Activated CD4-positive, alpha-beta memory T cell treated with anti-CD3 and anti-CD28 coated beads for 36 hours (primary cell): ENCODE measurements at regions of chr7 and their contacts with region 1.

Region 1: DNA sequence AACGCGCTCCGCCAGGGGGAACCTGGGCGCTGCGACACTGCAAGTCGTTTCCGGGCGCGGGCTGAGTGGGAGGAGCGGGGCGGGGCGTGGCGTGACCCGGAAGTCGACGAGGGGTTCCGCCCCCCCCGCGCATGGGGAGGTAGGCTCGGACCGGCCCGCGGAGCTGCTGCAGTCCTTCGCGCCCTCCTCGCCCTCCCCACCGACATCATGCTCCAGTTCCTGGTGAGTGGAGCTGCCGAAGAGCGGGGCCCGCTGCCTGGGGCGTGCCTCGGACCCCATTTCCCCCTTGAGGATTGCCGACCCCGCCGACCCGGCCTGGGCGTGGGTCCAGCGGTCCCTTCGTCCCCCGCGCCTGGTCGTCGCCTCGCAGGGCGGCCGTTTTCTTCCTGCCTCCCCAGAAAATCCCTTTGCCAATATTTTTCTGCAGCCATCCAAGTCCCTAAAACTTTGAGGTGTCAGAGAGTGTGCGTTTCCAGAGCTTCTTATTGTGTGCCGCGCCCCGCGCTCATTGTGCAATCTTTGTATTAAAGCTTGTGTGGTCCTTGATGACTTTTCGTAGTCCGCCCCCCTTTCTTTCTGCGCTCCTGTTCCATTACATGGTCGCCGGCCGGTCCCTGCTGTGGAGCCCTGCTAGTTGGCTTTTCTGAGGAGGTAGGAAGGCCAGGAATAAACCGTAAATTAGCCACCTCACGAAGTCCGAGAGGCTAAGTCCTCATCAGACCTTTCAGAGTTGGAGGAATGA is at the start of gene STMP1:
- DNase-seq: peak; percentile 97
- H3K4me3 Mint-ChIP-seq: peak within 1 kb of the TSS; percentile 95
- H3K27ac Mint-ChIP-seq: peak within 1 kb of the TSS; percentile 96
- H3K4me1 Mint-ChIP-seq: peaks cover 41% of the 10 kb centered on the region
- H3K27me3 Mint-ChIP-seq: no peaks in the 10 kb centered on the region
- total RNA-seq, gene STMP1: 17.3 to 17.8 TPM

Region 2: DNA sequence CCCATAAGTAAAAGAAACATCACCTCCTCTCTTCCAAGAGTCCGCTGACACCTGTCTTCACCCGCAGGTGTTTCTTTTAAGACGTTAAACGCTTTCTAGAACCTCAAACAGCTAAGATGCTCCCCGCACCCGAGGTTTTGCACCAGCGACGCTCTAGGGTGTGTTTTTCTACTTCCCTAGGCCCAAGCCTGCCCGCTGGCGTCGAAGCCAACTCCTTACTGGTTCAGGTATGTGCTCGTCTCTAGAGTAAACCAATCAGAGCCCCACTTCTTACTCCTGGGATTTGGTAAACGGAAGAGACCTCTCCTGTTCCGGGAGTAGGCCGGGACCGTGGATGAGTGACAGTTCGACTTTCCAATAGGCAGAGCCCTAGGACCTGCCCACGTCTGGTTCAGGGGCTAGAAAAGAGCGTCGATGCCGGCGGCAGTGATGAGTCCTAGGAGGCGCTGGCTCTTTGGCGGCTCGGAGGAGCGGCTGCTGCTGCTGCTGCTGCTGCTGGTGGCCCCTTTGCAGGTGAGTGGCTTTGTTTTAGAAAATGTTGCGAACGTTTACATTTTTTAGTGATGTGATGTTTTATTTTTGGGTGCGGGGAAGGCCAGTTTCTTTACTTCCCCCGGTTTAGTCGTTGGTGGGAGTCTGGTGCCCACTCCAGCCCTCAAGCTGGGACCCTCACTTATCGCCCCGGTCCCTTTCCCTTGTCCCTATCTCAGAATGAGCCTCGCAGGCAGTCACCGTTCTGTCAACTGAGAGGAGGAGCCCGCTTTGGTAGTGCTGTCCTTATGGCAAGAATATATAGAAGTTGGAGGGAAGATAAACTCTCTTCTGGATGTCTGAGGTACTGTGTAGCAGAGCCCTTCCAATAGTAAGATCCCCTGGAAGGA is 1015.9 kb before region 1 on chr7 and contains the start of gene BPGM:
- CTCF ChIA-PET with region 1: no interaction called
- POLR2A ChIA-PET with region 1: no interaction called
- intact Hi-C with region 1: loop called (anchors 5 kb)
- DNase-seq: peak; percentile 98
- H3K4me3 Mint-ChIP-seq: no peak within 1 kb of the TSS
- H3K27ac Mint-ChIP-seq: no peak within 1 kb of the TSS
- H3K4me1 Mint-ChIP-seq: peaks cover 32% of the 10 kb centered on the region
- H3K27me3 Mint-ChIP-seq: no peaks in the 10 kb centered on the region
- total RNA-seq, gene BPGM: 23.7 to 24.9 TPM

Region 3: GRCh38 chr7:135211179-135211945 is 451.2 kb before region 1 on chr7 and contains the start of gene WDR91:
- CTCF ChIA-PET with region 1: no interaction called
- POLR2A ChIA-PET with region 1: interaction called, 3 read pairs
- intact Hi-C with region 1: loop called (anchors 5 kb)
- DNase-seq: peak; percentile 98
- H3K4me3 Mint-ChIP-seq: peak within 1 kb of the TSS; percentile 93
- H3K27ac Mint-ChIP-seq: peak within 1 kb of the TSS; percentile 83
- H3K4me1 Mint-ChIP-seq: peaks cover 23% of the 10 kb centered on the region
- H3K27me3 Mint-ChIP-seq: no peaks in the 10 kb centered on the region
- total RNA-seq, gene WDR91: 10.3 to 11.0 TPM

Region 4: DNA sequence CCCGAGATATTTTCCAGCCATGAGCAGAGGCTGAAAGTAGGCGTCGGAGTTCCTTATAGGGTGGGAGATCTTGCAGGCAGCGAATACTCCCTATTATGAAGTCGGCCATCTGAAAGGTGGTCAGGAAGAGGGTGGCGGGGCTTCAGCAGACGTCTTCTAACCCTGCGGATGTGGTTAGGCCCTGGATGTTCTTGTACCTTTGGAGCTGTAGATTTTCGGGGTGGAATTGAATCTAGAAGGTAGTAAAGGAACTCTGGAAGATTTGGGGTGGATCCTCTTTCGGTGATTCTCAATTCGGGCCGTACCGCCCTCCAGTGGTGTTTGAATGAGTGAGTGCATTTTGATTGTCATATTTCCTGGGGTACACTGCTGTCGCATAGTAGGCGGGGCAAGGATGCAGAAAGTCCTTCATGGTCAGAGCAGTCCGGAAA is 104.2 kb before region 1 on chr7:
- CTCF ChIA-PET with region 1: no interaction called
- POLR2A ChIA-PET with region 1: no interaction called
- intact Hi-C with region 1: loop called (anchors 1 kb)
- DNase-seq: peak; percentile 79
- H3K4me3 Mint-ChIP-seq: no peak overlapping the region
- H3K27ac Mint-ChIP-seq: no peak overlapping the region
- H3K4me1 Mint-ChIP-seq: peaks cover 16% of the 10 kb centered on the region
- H3K27me3 Mint-ChIP-seq: no peaks in the 10 kb centered on the region

Region 5: GRCh38 chr7:135682191-135682590 is 19.6 kb after region 1 on chr7:
- CTCF ChIA-PET with region 1: interaction called, 7 read pairs
- POLR2A ChIA-PET with region 1: interaction called, 11 read pairs
- intact Hi-C with region 1: loop called (anchors 1 kb)
- DNase-seq: no peak
- H3K4me3 Mint-ChIP-seq: no peak overlapping the region
- H3K27ac Mint-ChIP-seq: no peak overlapping the region
- H3K4me1 Mint-ChIP-seq: peaks cover 8% of the 10 kb centered on the region
- H3K27me3 Mint-ChIP-seq: no peaks in the 10 kb centered on the region

Region 6: GRCh38 chr7:135977007-135977741 is 314.6 kb after region 1 on chr7 and contains the start of gene MTPN:
- CTCF ChIA-PET with region 1: no interaction called
- POLR2A ChIA-PET with region 1: no interaction called
- intact Hi-C with region 1: loop called (anchors 1 kb)
- DNase-seq: peak; percentile 99
- H3K4me3 Mint-ChIP-seq: peak within 1 kb of the TSS; percentile 90
- H3K27ac Mint-ChIP-seq: peak within 1 kb of the TSS; percentile 92
- H3K4me1 Mint-ChIP-seq: peaks cover 73% of the 10 kb centered on the region
- H3K27me3 Mint-ChIP-seq: no peaks in the 10 kb centered on the region
- total RNA-seq, gene MTPN: 138 to 143 TPM